Caco-2 (cell line): ENCODE measurements at regions of chr12 and their contacts with region 1.

Region 1: GRCh38 chr12:108921946-108922345 is 42.1 kb downstream of the DAO start:
- DNase-seq: peak; percentile 64 to 67
- H3K4me3 ChIP-seq: no peak overlapping the region
- H3K4me3 Mint-ChIP-seq: no peak overlapping the region
- H3K27ac Mint-ChIP-seq: no peak overlapping the region
- H3K4me1 ChIP-seq: peaks cover 35% of the 10 kb centered on the region
- H3K4me1 Mint-ChIP-seq: peaks cover 27% of the 10 kb centered on the region
- H3K27me3 ChIP-seq: no peaks in the 10 kb centered on the region
- H3K27me3 Mint-ChIP-seq: no peaks in the 10 kb centered on the region
- CTCF ChIP-seq: no peak

Region 2: GRCh38 chr12:108884116-108885012 is 37.6 kb before region 1 on chr12:
- CTCF ChIA-PET with region 1: no interaction called
- POLR2A ChIA-PET with region 1: no interaction called
- intact Hi-C with region 1: no loop called
- DNase-seq: peak; percentile 55 to 60
- H3K4me3 ChIP-seq: no peak overlapping the region
- H3K4me3 Mint-ChIP-seq: no peak overlapping the region
- H3K27ac Mint-ChIP-seq: no peak overlapping the region
- H3K4me1 ChIP-seq: no peaks in the 10 kb centered on the region
- H3K4me1 Mint-ChIP-seq: no peaks in the 10 kb centered on the region
- H3K27me3 ChIP-seq: no peaks in the 10 kb centered on the region
- H3K27me3 Mint-ChIP-seq: no peaks in the 10 kb centered on the region
- CTCF ChIP-seq: peak; percentile 41 to 67

Region 3: GRCh38 chr12:108911902-108912301 is 10.0 kb before region 1 on chr12:
- CTCF ChIA-PET with region 1: no interaction called
- POLR2A ChIA-PET with region 1: no interaction called
- intact Hi-C with region 1: loop called (anchors 1 kb)
- DNase-seq: peak; percentile 85 to 89
- H3K4me3 ChIP-seq: no peak overlapping the region
- H3K4me3 Mint-ChIP-seq: peak overlapping the region; percentile 42
- H3K27ac Mint-ChIP-seq: peak overlapping the region; percentile 79
- H3K4me1 ChIP-seq: peaks cover 38% of the 10 kb centered on the region
- H3K4me1 Mint-ChIP-seq: peaks cover 20% of the 10 kb centered on the region
- H3K27me3 ChIP-seq: no peaks in the 10 kb centered on the region
- H3K27me3 Mint-ChIP-seq: no peaks in the 10 kb centered on the region
- CTCF ChIP-seq: no peak

Region 4: DNA sequence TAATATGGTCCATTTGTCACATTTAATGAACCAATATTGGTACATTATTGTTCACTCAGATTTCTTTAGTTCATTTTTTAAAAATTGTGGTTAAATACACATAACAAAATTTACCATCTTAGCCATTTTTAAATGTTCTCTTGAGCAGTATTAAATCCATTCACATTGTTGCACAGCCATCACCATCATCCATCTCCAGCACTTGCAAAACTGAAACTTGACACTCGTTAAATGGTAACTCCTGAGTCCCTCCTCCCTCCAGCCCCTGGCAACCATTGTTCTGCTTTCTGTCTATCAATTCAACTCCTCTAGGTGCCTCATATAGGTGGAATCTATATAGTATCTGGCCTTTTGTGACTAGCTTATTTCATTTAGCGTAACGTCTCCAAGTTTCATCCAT is 280.8 kb after region 1 on chr12:
- CTCF ChIA-PET with region 1: no interaction called
- POLR2A ChIA-PET with region 1: no interaction called
- intact Hi-C with region 1: no loop called
- DNase-seq: no peak
- H3K4me3 ChIP-seq: no peak overlapping the region
- H3K4me3 Mint-ChIP-seq: no peak overlapping the region
- H3K27ac Mint-ChIP-seq: no peak overlapping the region
- H3K4me1 ChIP-seq: peaks cover 3% of the 10 kb centered on the region
- H3K4me1 Mint-ChIP-seq: no peaks in the 10 kb centered on the region
- H3K27me3 ChIP-seq: no peaks in the 10 kb centered on the region
- H3K27me3 Mint-ChIP-seq: no peaks in the 10 kb centered on the region
- CTCF ChIP-seq: no peak